A673 (cell line): ENCODE measurements at regions of chr5 and their contacts with region 1.

Region 1: GRCh38 chr5:39730699-39731098 is 305.9 kb upstream of the DAB2 start:
- DNase-seq: no peak
- H3K4me3 ChIP-seq: no peak overlapping the region
- H3K27ac ChIP-seq: no peak overlapping the region
- H3K4me1 ChIP-seq: no peaks in the 10 kb centered on the region
- H3K27me3 ChIP-seq: no peaks in the 10 kb centered on the region
- CTCF ChIP-seq: no peak

Region 2: GRCh38 chr5:40440746-40441145 is 710.0 kb after region 1 on chr5:
- CTCF ChIA-PET with region 1: no interaction called
- POLR2A ChIA-PET with region 1: interaction called, 10 read pairs
- intact Hi-C with region 1: no loop called
- DNase-seq: no peak
- H3K4me3 ChIP-seq: no peak overlapping the region
- H3K27ac ChIP-seq: no peak overlapping the region
- H3K4me1 ChIP-seq: no peaks in the 10 kb centered on the region
- H3K27me3 ChIP-seq: no peaks in the 10 kb centered on the region
- CTCF ChIP-seq: no peak